Ascending aorta (tissue), 2 donors: ENCODE measurements at regions of chr15 and their contacts with region 1.

Region 1: GRCh38 chr15:74127260-74127953 is 3.0 kb upstream of the ISLR2 start:
- DNase-seq: peak; percentile 33 to 94
- H3K4me3 ChIP-seq: peak overlapping the region; percentile 41 to 57
- H3K27ac ChIP-seq: no peak overlapping the region
- H3K4me1 ChIP-seq: peaks cover 0 to 15% of the 10 kb centered on the region in 2 donors
- H3K27me3 ChIP-seq: peaks cover 19% of the 10 kb centered on the region
- CTCF ChIP-seq: peak; percentile 98 to 99 (median 98)

Region 2: DNA sequence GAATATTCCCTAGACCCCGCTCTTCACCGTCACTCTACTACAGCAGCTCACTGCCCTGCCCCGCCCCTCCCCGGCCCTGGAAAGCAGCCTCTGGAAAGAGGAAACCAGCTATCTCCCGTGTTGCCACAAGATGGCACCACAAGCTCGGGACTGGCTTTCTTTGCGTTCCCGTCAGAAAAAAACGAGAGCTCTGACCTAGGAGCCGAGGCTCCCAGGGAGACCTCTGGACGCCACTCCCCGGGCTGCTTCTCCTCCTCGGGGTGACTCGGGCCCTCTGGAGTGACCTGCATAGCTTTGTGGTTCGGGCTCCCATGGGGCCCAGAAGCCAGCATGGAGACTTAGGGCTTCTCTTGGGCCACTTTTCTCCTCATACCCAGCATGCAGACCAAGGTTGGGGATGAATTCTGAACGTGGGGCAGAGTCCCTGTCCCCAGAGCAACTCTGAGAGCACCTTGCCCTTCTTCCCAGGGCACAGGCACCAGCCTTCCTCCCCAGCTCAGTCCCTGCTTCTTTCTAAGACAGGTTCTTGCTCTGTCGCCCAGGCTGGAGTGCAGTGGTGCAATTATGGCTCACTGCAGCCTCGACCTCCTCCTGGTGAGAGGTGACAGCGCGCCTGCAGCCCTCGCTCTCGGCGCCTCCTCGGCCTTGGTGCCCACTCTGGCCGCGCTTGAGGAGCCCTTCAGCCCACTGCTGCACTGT is 154.3 kb before region 1 on chr15:
- intact Hi-C with region 1: loop called (anchors 5 kb)
- DNase-seq: peak; percentile 21 to 93
- H3K4me3 ChIP-seq: peak overlapping the region; percentile 39 to 50
- H3K27ac ChIP-seq: no peak overlapping the region
- H3K4me1 ChIP-seq: peaks cover 0 to 8% of the 10 kb centered on the region in 2 donors
- H3K27me3 ChIP-seq: no peaks in the 10 kb centered on the region
- CTCF ChIP-seq: peak; percentile 90 to 92 (median 91)

Region 3: GRCh38 chr15:74053941-74054529 is 73.4 kb before region 1 on chr15:
- intact Hi-C with region 1: loop called (anchors 5 kb)
- DNase-seq: peak in 1 of 2 donors; percentile 86
- H3K4me3 ChIP-seq: peak overlapping the region; percentile 15 to 32
- H3K27ac ChIP-seq: peak overlapping the region; percentile 94 to 97
- H3K4me1 ChIP-seq: peaks cover 28 to 46% of the 10 kb centered on the region in 2 donors
- H3K27me3 ChIP-seq: no peaks in the 10 kb centered on the region
- CTCF ChIP-seq: peak; percentile 47 to 83 (median 82)

Region 4: GRCh38 chr15:74179341-74179841 is 52.0 kb after region 1 on chr15:
- intact Hi-C with region 1: no loop called
- DNase-seq: peak; percentile 83 to 97
- H3K4me3 ChIP-seq: no peak overlapping the region
- H3K27ac ChIP-seq: peak overlapping the region; percentile 82 to 85
- H3K4me1 ChIP-seq: peaks cover 42 to 59% of the 10 kb centered on the region in 2 donors
- H3K27me3 ChIP-seq: no peaks in the 10 kb centered on the region
- CTCF ChIP-seq: no peak

Region 5: GRCh38 chr15:74251131-74251811 is 123.9 kb after region 1 on chr15:
- intact Hi-C with region 1: loop called (anchors 5 kb)
- DNase-seq: peak; percentile 65 to 84
- H3K4me3 ChIP-seq: no peak overlapping the region
- H3K27ac ChIP-seq: peak overlapping the region; percentile 55 to 67
- H3K4me1 ChIP-seq: peaks cover 3 to 23% of the 10 kb centered on the region in 2 donors
- H3K27me3 ChIP-seq: no peaks in the 10 kb centered on the region
- CTCF ChIP-seq: no peak

Region 6: GRCh38 chr15:74307827-74308644 is 180.6 kb after region 1 on chr15:
- intact Hi-C with region 1: loop called (anchors 1 kb)
- DNase-seq: peak in 1 of 2 donors; percentile 74
- H3K4me3 ChIP-seq: no peak overlapping the region
- H3K27ac ChIP-seq: no peak overlapping the region
- H3K4me1 ChIP-seq: no peaks in the 10 kb centered on the region
- H3K27me3 ChIP-seq: no peaks in the 10 kb centered on the region
- CTCF ChIP-seq: peak; percentile 61 to 89 (median 69)

Region 7: GRCh38 chr15:74322181-74323076 is 195.0 kb after region 1 on chr15:
- intact Hi-C with region 1: loop called (anchors 1 kb)
- DNase-seq: peak in 1 of 2 donors; percentile 75
- H3K4me3 ChIP-seq: no peak overlapping the region
- H3K27ac ChIP-seq: no peak overlapping the region
- H3K4me1 ChIP-seq: peaks cover 12 to 19% of the 10 kb centered on the region in 2 donors
- H3K27me3 ChIP-seq: no peaks in the 10 kb centered on the region
- CTCF ChIP-seq: peak; percentile 85 to 93 (median 91)